CD8-positive, alpha-beta T cell (primary cell): ENCODE measurements at regions of chr11 and their contacts with region 1.

Region 1: GRCh38 chr11:236774-237767 is at the start of gene PSMD13:
- DNase-seq: peak; percentile 74 to 94 (median 88)
- ATAC-seq: peak; percentile 72
- H3K4me3 ChIP-seq: peak within 1 kb of the TSS; percentile 83 to 100
- H3K4me3 Mint-ChIP-seq: peak within 1 kb of the TSS; percentile 96
- H3K27ac ChIP-seq: peak within 1 kb of the TSS; percentile 99 to 100
- H3K27ac Mint-ChIP-seq: peak within 1 kb of the TSS; percentile 99
- H3K4me1 ChIP-seq: peaks cover 24% of the 10 kb centered on the region
- H3K4me1 Mint-ChIP-seq: peaks cover 59% of the 10 kb centered on the region
- H3K27me3 ChIP-seq: no peaks in the 10 kb centered on the region
- H3K27me3 Mint-ChIP-seq: no peaks in the 10 kb centered on the region
- CTCF ChIP-seq: no peak
- total RNA-seq, gene PSMD13: 74.3 to 82.8 TPM

Region 2: GRCh38 chr11:269146-269890 is 32.2 kb after region 1 on chr11:
- CTCF ChIA-PET with region 1: no interaction called
- POLR2A ChIA-PET with region 1: interaction called, 17 read pairs
- intact Hi-C with region 1: loop called (anchors 1 to 2 kb)
- DNase-seq: peak in 5 of 9 experiments; percentile 60 to 90 (median 77)
- ATAC-seq: peak; percentile 69
- H3K4me3 ChIP-seq: peak overlapping the region; percentile 38 to 60
- H3K4me3 Mint-ChIP-seq: peak overlapping the region; percentile 85
- H3K27ac ChIP-seq: peak overlapping the region; percentile 76 to 96
- H3K27ac Mint-ChIP-seq: peak overlapping the region; percentile 98
- H3K4me1 ChIP-seq: peaks cover 23% of the 10 kb centered on the region
- H3K4me1 Mint-ChIP-seq: peaks cover 30% of the 10 kb centered on the region
- H3K27me3 ChIP-seq: no peaks in the 10 kb centered on the region
- H3K27me3 Mint-ChIP-seq: no peaks in the 10 kb centered on the region
- CTCF ChIP-seq: no peak

Region 3: GRCh38 chr11:288328-289144 is 51.5 kb after region 1 on chr11 and contains the start of gene PGGHG:
- CTCF ChIA-PET with region 1: no interaction called
- POLR2A ChIA-PET with region 1: interaction called, 5 read pairs
- intact Hi-C with region 1: loop called (anchors 2 to 5 kb)
- DNase-seq: peak in 7 of 9 experiments; percentile 53 to 78 (median 69)
- ATAC-seq: peak; percentile 25
- H3K4me3 ChIP-seq: peak within 1 kb of the TSS; percentile 56 to 94
- H3K4me3 Mint-ChIP-seq: peak within 1 kb of the TSS; percentile 99
- H3K27ac ChIP-seq: peak within 1 kb of the TSS; percentile 66 to 83
- H3K27ac Mint-ChIP-seq: peak within 1 kb of the TSS; percentile 99
- H3K4me1 ChIP-seq: peaks cover 55% of the 10 kb centered on the region
- H3K4me1 Mint-ChIP-seq: peaks cover 58% of the 10 kb centered on the region
- H3K27me3 ChIP-seq: peaks cover 0 to under 1% of the 10 kb centered on the region in 2 experiments
- H3K27me3 Mint-ChIP-seq: no peaks in the 10 kb centered on the region
- CTCF ChIP-seq: no peak
- total RNA-seq, gene PGGHG: 902 to 919 TPM

Region 4: GRCh38 chr11:363948-364761 is 127.1 kb after region 1 on chr11:
- CTCF ChIA-PET with region 1: interaction called, 11 read pairs
- POLR2A ChIA-PET with region 1: no interaction called
- intact Hi-C with region 1: no loop called
- DNase-seq: peak; percentile 45 to 83 (median 67)
- ATAC-seq: peak; percentile 86
- H3K4me3 ChIP-seq: no peak overlapping the region
- H3K4me3 Mint-ChIP-seq: no peak overlapping the region
- H3K27ac ChIP-seq: peak overlapping the region in 1 of 2 experiments; percentile 21
- H3K27ac Mint-ChIP-seq: no peak overlapping the region
- H3K4me1 ChIP-seq: peaks cover 11% of the 10 kb centered on the region
- H3K4me1 Mint-ChIP-seq: peaks cover 21% of the 10 kb centered on the region
- H3K27me3 ChIP-seq: peaks cover 11 to 17% of the 10 kb centered on the region in 2 experiments
- H3K27me3 Mint-ChIP-seq: peaks cover 27% of the 10 kb centered on the region
- CTCF ChIP-seq: peak; percentile 49

Region 5: DNA sequence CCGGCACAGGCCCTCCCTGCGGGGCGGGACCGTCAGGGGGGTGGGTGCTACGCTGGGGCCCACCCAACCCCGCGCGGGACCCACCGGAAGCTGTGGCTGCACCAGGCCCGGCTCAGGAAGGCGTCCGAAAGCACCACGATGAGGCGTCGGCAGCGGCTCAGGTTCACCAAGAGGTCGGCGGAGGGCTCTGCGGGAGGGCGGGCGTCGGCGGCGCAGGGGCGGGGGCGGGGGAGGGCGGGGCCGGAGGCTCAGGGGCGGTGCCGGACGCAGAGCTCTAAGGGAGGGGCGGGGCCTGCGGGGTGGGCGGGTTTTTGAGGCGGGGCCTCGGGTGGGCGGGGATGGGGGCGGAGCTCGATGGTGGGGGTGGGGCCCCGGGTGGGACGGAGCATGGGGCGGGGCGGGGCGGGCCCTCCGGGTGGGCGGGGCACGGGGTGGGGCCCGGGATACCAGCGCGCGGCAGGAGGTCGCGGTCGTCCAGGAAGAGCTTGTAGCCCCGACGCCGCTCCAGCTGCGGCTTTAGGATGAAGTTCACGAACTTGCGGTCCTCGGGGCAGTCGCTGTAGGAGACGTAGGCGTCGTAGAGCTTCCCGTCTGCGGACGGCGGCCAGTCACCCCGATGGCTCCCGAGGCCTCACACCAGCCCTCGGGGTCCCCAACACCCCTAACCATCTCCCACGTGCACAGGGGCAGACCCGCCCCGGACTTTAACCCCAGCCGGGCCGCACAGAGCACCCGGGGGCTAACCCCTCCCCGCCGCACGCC is 170.1 kb after region 1 on chr11:
- CTCF ChIA-PET with region 1: no interaction called
- POLR2A ChIA-PET with region 1: interaction called, 4 read pairs
- intact Hi-C with region 1: loop called (anchors 1 to 2 kb)
- DNase-seq: peak; percentile 89 to 99 (median 94)
- ATAC-seq: peak; percentile 86
- H3K4me3 ChIP-seq: peak overlapping the region in 1 of 2 experiments; percentile 19
- H3K4me3 Mint-ChIP-seq: no peak overlapping the region
- H3K27ac ChIP-seq: peak overlapping the region; percentile 46 to 73
- H3K27ac Mint-ChIP-seq: peak overlapping the region; percentile 82
- H3K4me1 ChIP-seq: peaks cover 25% of the 10 kb centered on the region
- H3K4me1 Mint-ChIP-seq: peaks cover 17% of the 10 kb centered on the region
- H3K27me3 ChIP-seq: no peaks in the 10 kb centered on the region
- H3K27me3 Mint-ChIP-seq: no peaks in the 10 kb centered on the region
- CTCF ChIP-seq: no peak

Region 6: GRCh38 chr11:615504-616319 is 378.6 kb after region 1 on chr11 and contains the start of gene IRF7:
- CTCF ChIA-PET with region 1: no interaction called
- POLR2A ChIA-PET with region 1: no interaction called
- intact Hi-C with region 1: loop called in 1 of 2 experiments (anchors 10 kb)
- DNase-seq: peak; percentile 65 to 92 (median 87)
- ATAC-seq: peak; percentile 72
- H3K4me3 ChIP-seq: peak within 1 kb of the TSS; percentile 84 to 92
- H3K4me3 Mint-ChIP-seq: peak within 1 kb of the TSS; percentile 92
- H3K27ac ChIP-seq: peak within 1 kb of the TSS; percentile 83 to 95
- H3K27ac Mint-ChIP-seq: peak within 1 kb of the TSS; percentile 94
- H3K4me1 ChIP-seq: peaks cover 30% of the 10 kb centered on the region
- H3K4me1 Mint-ChIP-seq: peaks cover 10% of the 10 kb centered on the region
- H3K27me3 ChIP-seq: no peaks in the 10 kb centered on the region
- H3K27me3 Mint-ChIP-seq: no peaks in the 10 kb centered on the region
- CTCF ChIP-seq: no peak
- total RNA-seq, gene IRF7: 102 to 106 TPM

Region 7: GRCh38 chr11:1335811-1336761 is 1099.0 kb after region 1 on chr11:
- CTCF ChIA-PET with region 1: no interaction called
- POLR2A ChIA-PET with region 1: no interaction called
- intact Hi-C with region 1: loop called in 1 of 2 experiments (anchors 10 kb)
- DNase-seq: peak in 8 of 9 experiments; percentile 50 to 85 (median 66)
- ATAC-seq: peak; percentile 69
- H3K4me3 ChIP-seq: peak overlapping the region; percentile 45 to 60
- H3K4me3 Mint-ChIP-seq: peak overlapping the region; percentile 80
- H3K27ac ChIP-seq: peak overlapping the region in 1 of 2 experiments; percentile 19
- H3K27ac Mint-ChIP-seq: peak overlapping the region; percentile 71
- H3K4me1 ChIP-seq: peaks cover 12% of the 10 kb centered on the region
- H3K4me1 Mint-ChIP-seq: peaks cover 18% of the 10 kb centered on the region
- H3K27me3 ChIP-seq: no peaks in the 10 kb centered on the region
- H3K27me3 Mint-ChIP-seq: no peaks in the 10 kb centered on the region
- CTCF ChIP-seq: no peak